ENCODE measurements at regions of chr3 and their contacts with region 1.

Region 1: GRCh38 chr3:14740983-14741382 is 66.0 kb downstream of the C3orf20 start:
- DNase-seq: no peak
- ATAC-seq: no peak
- H3K4me3 ChIP-seq: no peak overlapping the region
- H3K27ac ChIP-seq: no peak overlapping the region
- H3K4me1 ChIP-seq: no peaks in the 10 kb centered on the region
- H3K27me3 ChIP-seq: 0 out of 2 replicates have a peak, but pooled peaks cover 1% of the 10 kb centered on the region
- CTCF ChIP-seq: no peak
- POLR2A ChIP-seq: no peak
- RAD21 ChIP-seq: no peak

Region 2: GRCh38 chr3:14725013-14725412 is 16.0 kb before region 1 on chr3:
- CTCF ChIA-PET with region 1: no interaction called
- POLR2A ChIA-PET with region 1: no interaction called
- dilution Hi-C with region 1: no loop called
- in situ Hi-C with region 1: no loop called
- intact Hi-C with region 1: no loop called
- DNase-seq: peak; percentile 64
- ATAC-seq: peak; percentile 67
- H3K4me3 ChIP-seq: no peak overlapping the region
- H3K27ac ChIP-seq: peak overlapping the region; percentile 85; the same call in 1 of the 2 replicates
- H3K4me1 ChIP-seq: peaks cover 13% of the 10 kb centered on the region; the same call in 1 of the 2 replicates
- H3K27me3 ChIP-seq: peaks cover 2% of the 10 kb centered on the region; the same call in 1 of the 2 replicates
- CTCF ChIP-seq: no peak
- POLR2A ChIP-seq: no peak
- RAD21 ChIP-seq: no peak

Region 3: DNA sequence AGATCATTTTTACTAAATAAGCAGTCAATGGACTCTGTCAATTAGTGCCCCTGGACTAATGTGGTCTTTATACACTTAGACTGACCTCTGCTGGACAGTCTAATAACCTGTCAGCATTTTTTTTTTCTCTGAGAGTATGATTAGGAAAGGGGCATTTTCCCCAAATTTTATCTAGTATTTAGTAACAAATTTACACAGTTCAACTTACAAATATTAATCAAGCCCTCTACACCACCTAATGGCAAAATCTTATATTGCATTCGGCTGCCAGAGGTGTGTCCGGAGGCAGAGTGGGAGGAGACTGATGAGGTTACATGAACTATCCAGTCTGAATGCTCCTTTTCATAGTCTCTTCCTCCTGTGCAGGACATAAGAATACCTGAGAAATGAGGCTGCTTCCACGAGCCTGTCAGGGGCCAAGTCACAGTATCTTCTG is 816.5 kb after region 1 on chr3:
- CTCF ChIA-PET with region 1: no interaction called
- POLR2A ChIA-PET with region 1: no interaction called
- dilution Hi-C with region 1: no loop called
- in situ Hi-C with region 1: no loop called
- intact Hi-C with region 1: loop called (anchors 5 kb)
- DNase-seq: peak; percentile 75
- ATAC-seq: peak; percentile 99
- H3K4me3 ChIP-seq: no peak overlapping the region
- H3K27ac ChIP-seq: no peak overlapping the region
- H3K4me1 ChIP-seq: no peaks in the 10 kb centered on the region
- H3K27me3 ChIP-seq: no peaks in the 10 kb centered on the region
- CTCF ChIP-seq: peak; percentile 58
- POLR2A ChIP-seq: no peak
- RAD21 ChIP-seq: peak; percentile 52

Measured in IMR-90 (cell line).